AG04449 (cell line): ENCODE measurements at regions of chr12 and their contacts with region 1.

Region 1: GRCh38 chr12:89709157-89709994 is 738 bp upstream of the ATP2B1 start:
- DNase-seq: peak; percentile 95
- H3K4me3 ChIP-seq: peak overlapping the region; percentile 85
- CTCF ChIP-seq: peak; percentile 8

Region 2: GRCh38 chr12:89733579-89734201 is 24.3 kb after region 1 on chr12:
- CTCF ChIA-PET with region 1: no interaction called
- POLR2A ChIA-PET with region 1: interaction called, 17 read pairs
- DNase-seq: peak; percentile 84
- H3K4me3 ChIP-seq: no peak overlapping the region
- CTCF ChIP-seq: no peak

Region 3: GRCh38 chr12:89840162-89840922 is 131.0 kb after region 1 on chr12:
- CTCF ChIA-PET with region 1: no interaction called
- POLR2A ChIA-PET with region 1: no interaction called
- DNase-seq: no peak
- H3K4me3 ChIP-seq: no peak overlapping the region
- CTCF ChIP-seq: no peak